Right ventricle myocardium inferior (tissue), 1 donor: ENCODE measurements at regions of chr3 and their contacts with region 1.

Region 1: GRCh38 chr3:112519424-112520001 is 20.2 kb upstream of the BTLA start:
- DNase-seq: no peak
- ATAC-seq: peak; percentile 62

Region 2: DNA sequence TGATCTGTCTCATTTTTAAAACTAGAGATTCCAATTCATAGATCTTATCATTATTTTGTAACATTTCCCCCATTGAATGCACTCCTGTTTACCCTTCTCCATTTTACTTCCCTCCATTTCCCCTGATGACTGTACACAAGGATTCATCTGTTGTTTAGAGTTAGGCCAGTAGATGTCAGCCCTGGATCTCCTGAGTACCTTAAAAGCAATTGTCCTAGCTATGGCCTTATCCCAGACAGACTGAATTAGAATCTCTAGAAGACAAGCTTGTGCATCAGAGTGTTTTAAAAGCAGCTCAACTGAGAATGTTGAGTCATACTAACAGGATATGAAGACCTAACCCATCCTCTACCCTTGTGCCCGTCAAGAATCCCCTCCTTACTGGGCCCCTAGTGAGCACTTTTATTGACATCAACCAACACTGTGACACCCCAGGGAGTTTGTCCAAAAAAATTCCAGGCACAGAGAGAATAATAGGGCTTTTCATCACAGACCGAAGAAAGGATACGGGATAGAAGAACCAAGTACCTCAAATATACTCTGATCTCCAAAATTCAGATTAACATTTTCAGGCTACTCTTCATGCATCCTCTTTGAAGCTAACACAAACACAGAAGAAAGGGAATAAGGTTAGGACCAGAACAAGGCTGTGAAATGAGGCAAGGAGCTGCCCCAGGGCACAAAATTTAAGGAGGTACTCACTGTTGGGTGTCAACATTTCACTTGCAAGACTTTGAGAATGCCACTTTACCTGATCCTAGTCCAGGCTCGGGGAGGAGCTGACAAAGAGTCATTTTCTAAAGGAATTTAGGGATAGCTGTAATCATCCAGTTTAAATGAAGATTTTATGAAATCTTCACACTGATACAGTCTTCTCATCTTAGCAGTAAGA is 941.5 kb before region 1 on chr3:
- intact Hi-C with region 1: loop called (anchors 10 kb)
- DNase-seq: no peak
- ATAC-seq: no peak

Region 3: GRCh38 chr3:112111785-112112402 is 407.6 kb before region 1 on chr3:
- intact Hi-C with region 1: loop called (anchors 5 kb)
- DNase-seq: no peak
- ATAC-seq: peak; percentile 52

Region 4: GRCh38 chr3:112327371-112327951 is 192.1 kb before region 1 on chr3:
- intact Hi-C with region 1: loop called (anchors 2 kb)
- DNase-seq: no peak
- ATAC-seq: peak; percentile 78